Esophagus muscularis mucosa (tissue), 4 donors: ENCODE measurements at regions of chr14 and their contacts with region 1.

Region 1: DNA sequence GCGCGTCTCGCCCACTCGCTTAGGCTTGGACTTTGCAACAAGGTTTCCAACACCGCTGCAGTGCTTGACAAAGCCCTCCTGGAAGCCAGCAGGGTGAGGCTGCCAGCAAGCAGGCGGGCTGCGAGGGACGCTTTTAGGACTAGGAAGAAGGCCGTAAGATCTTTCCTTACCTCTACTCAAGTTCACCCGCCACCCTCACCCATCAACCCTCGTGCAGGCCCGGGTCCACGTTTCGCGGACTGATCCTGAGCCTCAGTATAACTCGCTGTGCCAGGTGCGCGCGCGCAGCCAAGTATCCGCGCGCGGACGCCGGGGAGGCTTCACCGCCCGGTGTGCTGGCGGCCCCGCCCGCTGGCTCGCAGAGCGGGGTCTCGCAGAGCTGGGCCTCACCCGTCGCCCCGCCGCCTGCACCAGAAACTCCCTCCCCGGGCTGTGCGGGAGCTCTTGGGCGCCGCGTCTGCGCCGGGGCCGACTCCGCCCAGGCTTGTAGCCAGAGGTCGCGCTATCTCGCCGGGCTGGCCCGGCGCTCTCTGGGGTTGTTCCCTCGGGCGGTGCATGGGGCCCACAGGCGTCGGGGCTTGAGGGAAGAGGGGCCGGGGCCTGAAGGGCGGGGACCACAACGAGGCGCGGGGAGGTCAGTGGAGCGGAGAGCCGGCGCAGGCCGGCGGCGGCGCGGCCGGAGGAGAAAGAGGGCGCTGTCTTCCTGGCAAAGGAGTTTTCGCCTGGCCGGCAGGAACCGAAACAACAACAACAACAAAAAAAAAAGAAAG is 7.6 kb upstream of the SIX1 start:
- DNase-seq: no peak
- H3K4me3 ChIP-seq: peak overlapping the region; percentile 56 to 67 (median 62)
- H3K27ac ChIP-seq: peak overlapping the region in 2 of 4 donors; percentile 20 to 24
- H3K4me1 ChIP-seq: peaks cover 29 to 48% (median 39%) of the 10 kb centered on the region in 4 donors
- H3K27me3 ChIP-seq: peaks cover 6 to 96% (median 64%) of the 10 kb centered on the region in 4 donors
- CTCF ChIP-seq: peak in 2 of 3 experiments; percentile 25 to 27
- EP300 ChIP-seq: no peak
- POLR2A ChIP-seq: no peak

Region 2: DNA sequence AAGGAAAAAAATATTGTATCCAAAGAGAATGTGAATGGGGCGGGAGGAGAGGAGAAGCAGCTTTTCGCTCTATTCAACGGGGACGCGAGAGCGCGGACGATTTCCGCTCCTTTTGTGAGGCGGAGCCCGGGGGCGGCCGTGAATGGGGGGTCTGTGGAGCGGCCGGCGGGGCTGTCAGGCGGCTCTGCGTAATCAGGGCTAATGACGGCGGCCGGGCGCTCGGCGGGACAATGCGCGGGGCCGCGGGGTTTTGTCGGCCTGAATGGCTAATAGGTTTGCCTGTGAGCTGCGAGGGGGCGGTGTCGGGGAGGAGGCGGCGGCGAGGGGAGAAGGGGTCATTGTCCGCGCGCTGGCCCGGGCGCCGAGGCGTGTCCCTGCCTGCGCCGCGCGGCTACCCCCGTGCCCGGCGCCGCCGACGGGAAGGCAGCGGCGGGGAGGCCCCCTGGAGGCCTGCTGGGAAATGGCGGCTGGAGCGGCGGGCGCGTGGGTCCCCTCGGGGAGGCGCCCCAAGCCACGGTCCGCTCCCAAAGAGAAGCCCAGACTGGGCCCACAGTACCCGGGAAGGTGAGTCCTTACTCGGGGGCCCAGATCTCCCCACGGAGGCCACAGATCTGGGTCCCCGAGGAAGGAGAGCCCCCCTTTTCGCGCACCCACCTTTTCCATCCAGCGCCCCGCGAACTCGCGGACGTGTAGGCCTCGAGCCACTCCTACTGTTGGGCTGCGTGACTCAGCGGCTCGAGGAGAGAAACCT is 142.0 kb before region 1 on chr14:
- intact Hi-C with region 1: no loop called
- DNase-seq: no peak
- H3K4me3 ChIP-seq: peak overlapping the region; percentile 48 to 55 (median 48)
- H3K27ac ChIP-seq: no peak overlapping the region
- H3K4me1 ChIP-seq: peaks cover 23 to 38% (median 33%) of the 10 kb centered on the region in 4 donors
- H3K27me3 ChIP-seq: peaks cover 6 to 92% (median 63%) of the 10 kb centered on the region in 4 donors
- CTCF ChIP-seq: peak in 1 of 3 experiments; percentile 42
- EP300 ChIP-seq: no peak
- POLR2A ChIP-seq: no peak

Region 3: GRCh38 chr14:60713513-60713912 is 56.6 kb after region 1 on chr14:
- intact Hi-C with region 1: no loop called
- DNase-seq: no peak
- H3K4me3 ChIP-seq: no peak overlapping the region
- H3K27ac ChIP-seq: no peak overlapping the region
- H3K4me1 ChIP-seq: no peaks in the 10 kb centered on the region
- H3K27me3 ChIP-seq: no peaks in the 10 kb centered on the region
- CTCF ChIP-seq: no peak
- EP300 ChIP-seq: no peak
- POLR2A ChIP-seq: no peak

Region 4: GRCh38 chr14:60724137-60724619 is 67.3 kb after region 1 on chr14 and contains the start of gene SIX4:
- intact Hi-C with region 1: loop called (anchors 5 kb)
- DNase-seq: no peak
- H3K4me3 ChIP-seq: peak within 1 kb of the TSS; percentile 71 to 82 (median 76)
- H3K27ac ChIP-seq: peak within 1 kb of the TSS; percentile 69 to 84 (median 72)
- H3K4me1 ChIP-seq: peaks cover 20 to 36% (median 25%) of the 10 kb centered on the region in 4 donors
- H3K27me3 ChIP-seq: peaks cover 0 to 32% (median 0%) of the 10 kb centered on the region in 4 donors
- CTCF ChIP-seq: no peak
- EP300 ChIP-seq: no peak
- POLR2A ChIP-seq: no peak
- total RNA-seq, gene SIX4: 1.7 to 4.2 (median 2.7) TPM